ENCODE measurements at regions of chr1 and their contacts with region 1.

Region 1: DNA sequence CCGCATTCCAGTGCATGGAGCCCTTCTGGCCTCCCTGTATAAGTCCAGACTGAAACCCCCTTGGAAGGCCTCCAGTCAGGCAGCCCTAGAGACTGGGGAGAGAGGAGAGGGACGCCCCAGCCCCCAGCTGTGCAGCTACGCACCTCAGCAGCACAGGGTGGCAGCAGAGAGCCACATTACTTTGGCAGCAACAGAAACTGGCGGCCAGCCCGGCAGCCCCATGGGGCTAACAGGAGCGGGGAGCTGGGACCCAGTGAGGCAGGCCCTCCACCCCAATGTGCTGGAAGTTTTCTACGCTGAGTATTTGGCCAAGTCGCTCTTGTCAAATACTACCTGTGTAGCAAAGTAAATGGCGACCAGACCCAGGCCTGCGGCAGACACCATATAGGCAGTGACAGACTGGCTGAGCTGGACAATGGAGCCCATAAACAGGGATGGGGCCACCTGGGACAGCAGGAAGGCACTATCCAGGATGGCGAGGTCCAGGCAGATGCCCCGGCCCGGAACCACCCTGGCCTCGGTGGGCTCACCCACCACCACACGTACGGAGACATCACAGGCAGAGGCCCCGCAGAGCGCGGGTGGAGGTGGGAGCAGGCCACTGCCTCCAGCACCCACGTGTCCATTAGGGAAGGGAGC is 21.2 kb downstream of the SLC45A3 start:
- DNase-seq: peak; percentile 85
- ATAC-seq: peak; percentile 93
- H3K4me3 Mint-ChIP-seq: no peak overlapping the region
- H3K27ac Mint-ChIP-seq: no peak overlapping the region
- H3K4me1 Mint-ChIP-seq: peaks cover 3% of the 10 kb centered on the region
- H3K27me3 Mint-ChIP-seq: peaks cover 3% of the 10 kb centered on the region

Region 2: DNA sequence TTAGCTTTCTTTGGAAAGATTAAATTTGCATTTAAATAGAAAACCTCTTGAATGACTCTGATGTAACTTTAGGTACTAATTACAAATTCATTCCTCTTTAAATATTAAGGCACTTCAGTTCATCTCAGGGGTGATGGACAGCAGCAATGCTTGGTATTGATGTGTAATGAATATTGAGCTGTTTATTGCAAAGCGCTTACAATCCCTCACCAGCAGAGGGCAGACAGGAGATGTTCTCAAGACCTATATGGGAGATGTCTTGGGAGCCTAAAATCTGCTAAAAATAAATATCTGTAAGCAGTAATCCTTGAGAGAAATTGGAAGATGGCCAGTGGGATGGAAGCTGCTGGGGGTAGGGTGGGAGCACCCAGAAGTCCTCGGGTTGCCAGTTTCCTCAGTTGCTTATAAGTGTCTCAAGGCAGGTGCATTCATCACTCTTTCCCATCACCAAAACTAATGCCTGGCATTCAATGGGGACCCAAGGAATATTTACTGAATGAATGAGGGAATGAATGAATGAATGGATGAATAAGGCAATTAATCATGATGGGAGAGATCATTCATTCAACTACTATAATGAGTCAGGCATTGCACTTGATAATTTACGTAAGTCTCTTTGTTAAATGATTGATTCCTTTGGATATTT is 304.7 kb before region 1 on chr1:
- CTCF ChIA-PET with region 1: interaction called, 10 read pairs
- DNase-seq: peak; percentile 74
- ATAC-seq: peak; percentile 72
- H3K4me3 Mint-ChIP-seq: no peak overlapping the region
- H3K27ac Mint-ChIP-seq: no peak overlapping the region
- H3K4me1 Mint-ChIP-seq: no peaks in the 10 kb centered on the region
- H3K27me3 Mint-ChIP-seq: peaks cover 23% of the 10 kb centered on the region

Region 3: GRCh38 chr1:205536759-205537361 is 122.2 kb before region 1 on chr1:
- CTCF ChIA-PET with region 1: interaction called, 107 read pairs
- DNase-seq: peak; percentile 49
- ATAC-seq: peak; percentile 56
- H3K4me3 Mint-ChIP-seq: no peak overlapping the region
- H3K27ac Mint-ChIP-seq: peak overlapping the region; percentile 31
- H3K4me1 Mint-ChIP-seq: peaks cover 14% of the 10 kb centered on the region
- H3K27me3 Mint-ChIP-seq: peaks cover 21% of the 10 kb centered on the region

Region 4: DNA sequence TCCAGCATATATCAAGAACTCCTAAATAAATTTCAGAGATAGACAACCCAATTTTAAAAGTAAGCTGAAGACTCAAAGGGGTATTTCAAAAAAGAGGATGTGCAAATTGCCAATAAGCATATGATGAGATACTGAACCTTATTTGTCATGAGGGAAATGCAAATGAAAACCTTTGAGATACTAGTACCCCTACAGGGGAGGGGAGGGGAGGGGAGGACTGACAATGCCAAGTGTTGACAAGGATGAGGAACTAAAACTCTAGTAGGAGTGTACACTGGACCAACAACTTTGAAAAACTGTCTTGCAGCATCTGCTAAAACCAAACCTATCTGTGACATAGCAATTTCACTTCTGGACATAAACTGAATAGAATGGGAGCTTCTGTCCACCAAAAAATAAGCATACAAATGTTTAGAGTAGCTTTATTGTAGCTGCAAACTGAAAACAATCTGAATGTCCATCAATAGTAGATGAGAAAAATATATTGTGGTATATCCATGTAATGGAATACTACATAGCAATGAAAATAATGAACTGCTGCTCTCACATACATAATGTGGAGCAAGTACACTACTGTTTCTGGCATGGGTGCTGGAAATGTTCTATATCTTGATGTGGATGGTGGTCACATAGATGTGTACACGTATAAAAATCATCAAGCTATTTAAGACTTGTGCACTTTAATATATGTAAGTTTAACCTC is 97.4 kb before region 1 on chr1:
- CTCF ChIA-PET with region 1: no interaction called
- DNase-seq: no peak
- ATAC-seq: no peak
- H3K4me3 Mint-ChIP-seq: no peak overlapping the region
- H3K27ac Mint-ChIP-seq: no peak overlapping the region
- H3K4me1 Mint-ChIP-seq: no peaks in the 10 kb centered on the region
- H3K27me3 Mint-ChIP-seq: peaks cover 68% of the 10 kb centered on the region

Region 5: GRCh38 chr1:205600085-205600484 is 59.0 kb before region 1 on chr1:
- CTCF ChIA-PET with region 1: interaction called, 465 read pairs
- DNase-seq: peak; percentile 49
- ATAC-seq: peak; percentile 92
- H3K4me3 Mint-ChIP-seq: no peak overlapping the region
- H3K27ac Mint-ChIP-seq: peak overlapping the region; percentile 47
- H3K4me1 Mint-ChIP-seq: peaks cover 19% of the 10 kb centered on the region
- H3K27me3 Mint-ChIP-seq: no peaks in the 10 kb centered on the region

Region 6: DNA sequence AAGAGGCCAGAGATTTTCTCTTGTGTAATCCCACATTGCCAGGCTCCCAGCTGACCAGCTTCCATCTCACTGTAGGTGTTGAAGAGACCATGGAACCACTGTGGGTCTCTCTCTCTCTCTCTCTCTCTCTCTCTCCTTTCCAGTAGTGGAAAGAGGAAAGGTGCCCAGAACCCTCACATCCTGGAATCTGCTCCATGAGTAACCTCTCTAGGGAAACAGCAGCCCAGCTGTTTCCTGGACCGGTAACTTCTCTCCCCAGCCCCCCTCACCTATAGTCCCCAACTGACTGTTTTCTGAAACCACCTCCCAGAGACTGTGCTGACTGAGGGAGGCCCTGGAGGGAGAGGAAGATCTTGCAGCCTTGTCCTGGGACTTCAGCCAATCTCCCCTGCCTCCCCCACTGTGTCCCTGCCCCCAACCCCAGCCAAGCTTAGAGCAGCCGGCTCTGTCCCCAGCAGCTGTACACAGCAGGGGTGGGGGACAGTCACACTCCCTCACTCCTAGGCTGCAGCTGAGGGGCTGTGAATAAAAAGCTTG is 41.9 kb after region 1 on chr1:
- CTCF ChIA-PET with region 1: interaction called, 10 read pairs
- DNase-seq: no peak
- ATAC-seq: no peak
- H3K4me3 Mint-ChIP-seq: no peak overlapping the region
- H3K27ac Mint-ChIP-seq: no peak overlapping the region
- H3K4me1 Mint-ChIP-seq: peaks cover 2% of the 10 kb centered on the region
- H3K27me3 Mint-ChIP-seq: peaks cover 16% of the 10 kb centered on the region

Region 7: GRCh38 chr1:205783904-205784303 is 124.8 kb after region 1 on chr1:
- CTCF ChIA-PET with region 1: interaction called, 47 read pairs
- DNase-seq: no peak
- ATAC-seq: no peak
- H3K4me3 Mint-ChIP-seq: no peak overlapping the region
- H3K27ac Mint-ChIP-seq: no peak overlapping the region
- H3K4me1 Mint-ChIP-seq: peaks cover 13% of the 10 kb centered on the region
- H3K27me3 Mint-ChIP-seq: no peaks in the 10 kb centered on the region

Region 8: GRCh38 chr1:205967555-205968335 is 308.7 kb after region 1 on chr1:
- CTCF ChIA-PET with region 1: interaction called, 10 read pairs
- DNase-seq: no peak
- ATAC-seq: no peak
- H3K4me3 Mint-ChIP-seq: no peak overlapping the region
- H3K27ac Mint-ChIP-seq: no peak overlapping the region
- H3K4me1 Mint-ChIP-seq: no peaks in the 10 kb centered on the region
- H3K27me3 Mint-ChIP-seq: no peaks in the 10 kb centered on the region

Measured in activated CD8-positive, alpha-beta memory T cell treated with anti-CD3 and anti-CD28 coated beads, Interleukin-2, amount 10 ng/mL, durations not matched to agents 7 days and 5 days (primary cell).